CD8-positive, alpha-beta T cell (primary cell): ENCODE measurements at regions of chr6 and their contacts with region 1.

Region 1: DNA sequence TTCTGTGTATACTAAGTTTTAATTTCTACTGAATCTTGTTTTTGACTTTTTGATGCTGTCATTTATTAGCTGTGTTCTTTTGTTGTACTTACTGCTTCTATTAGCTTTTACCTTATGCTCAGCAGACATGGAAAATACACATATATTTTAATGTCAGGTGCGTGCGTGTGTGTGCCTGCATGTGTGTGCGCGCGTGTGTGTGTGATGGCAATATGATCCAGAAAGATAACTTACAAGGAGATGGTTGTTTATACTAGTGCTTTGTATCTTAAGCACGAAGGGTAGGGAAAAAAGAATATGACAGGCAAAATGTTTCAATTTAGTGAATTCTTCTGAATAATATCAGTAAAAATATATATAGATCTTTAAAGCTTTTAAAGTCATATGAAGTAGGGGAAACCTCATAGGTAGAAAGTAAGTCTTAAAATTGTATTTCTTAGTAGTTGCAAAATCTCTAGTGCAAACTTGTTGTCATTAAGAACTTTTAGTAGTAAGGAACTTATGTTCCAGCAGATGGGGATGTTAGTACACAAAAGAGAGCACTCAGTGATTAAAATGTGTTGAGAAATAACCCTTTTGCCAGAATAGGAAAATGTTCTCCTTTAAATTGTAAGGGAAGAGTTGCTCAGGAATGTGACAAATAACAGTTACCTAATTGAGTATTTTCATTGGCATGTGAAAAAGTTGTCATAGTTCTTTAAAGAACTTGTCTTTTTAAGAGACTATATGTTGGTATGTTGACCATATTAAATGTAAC is 13.2 kb downstream of the QKI start:
- DNase-seq: peak in 2 of 9 experiments; percentile 48 to 59
- ATAC-seq: no peak
- H3K4me3 ChIP-seq: no peak overlapping the region
- H3K4me3 Mint-ChIP-seq: no peak overlapping the region
- H3K27ac ChIP-seq: no peak overlapping the region
- H3K27ac Mint-ChIP-seq: no peak overlapping the region
- H3K4me1 ChIP-seq: no peaks in the 10 kb centered on the region
- H3K4me1 Mint-ChIP-seq: peaks cover 48% of the 10 kb centered on the region
- H3K27me3 ChIP-seq: no peaks in the 10 kb centered on the region
- H3K27me3 Mint-ChIP-seq: no peaks in the 10 kb centered on the region
- CTCF ChIP-seq: no peak

Region 2: GRCh38 chr6:163443985-163444533 is 16.4 kb after region 1 on chr6:
- CTCF ChIA-PET with region 1: no interaction called
- POLR2A ChIA-PET with region 1: no interaction called
- intact Hi-C with region 1: no loop called
- DNase-seq: no peak
- ATAC-seq: no peak
- H3K4me3 ChIP-seq: no peak overlapping the region
- H3K4me3 Mint-ChIP-seq: no peak overlapping the region
- H3K27ac ChIP-seq: no peak overlapping the region
- H3K27ac Mint-ChIP-seq: no peak overlapping the region
- H3K4me1 ChIP-seq: peaks cover 3% of the 10 kb centered on the region
- H3K4me1 Mint-ChIP-seq: peaks cover 53% of the 10 kb centered on the region
- H3K27me3 ChIP-seq: no peaks in the 10 kb centered on the region
- H3K27me3 Mint-ChIP-seq: no peaks in the 10 kb centered on the region
- CTCF ChIP-seq: no peak

Region 3: DNA sequence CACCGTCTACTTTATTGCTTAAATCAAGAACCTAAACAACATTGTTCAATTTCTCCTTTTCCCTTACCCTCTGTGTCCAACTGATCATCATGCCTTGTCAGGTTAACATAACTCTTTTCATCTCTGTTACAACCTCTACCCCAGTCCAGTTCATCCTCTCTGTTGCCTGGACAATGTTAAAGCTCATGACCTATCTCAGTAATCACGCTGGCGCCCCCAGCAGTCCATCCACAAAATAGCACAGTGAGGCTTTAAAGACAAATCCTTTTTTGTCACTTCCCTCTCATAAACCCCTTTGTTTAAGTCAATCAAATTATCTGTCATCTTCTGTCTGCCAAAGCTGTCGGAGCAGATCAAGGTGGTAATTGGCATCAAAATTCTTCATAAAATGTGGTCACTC is 127.0 kb after region 1 on chr6:
- CTCF ChIA-PET with region 1: interaction called, 6 read pairs
- POLR2A ChIA-PET with region 1: no interaction called
- intact Hi-C with region 1: loop called in 1 of 2 experiments (anchors 2 kb)
- DNase-seq: peak; percentile 26 to 66 (median 58)
- ATAC-seq: peak; percentile 69
- H3K4me3 ChIP-seq: no peak overlapping the region
- H3K4me3 Mint-ChIP-seq: no peak overlapping the region
- H3K27ac ChIP-seq: no peak overlapping the region
- H3K27ac Mint-ChIP-seq: no peak overlapping the region
- H3K4me1 ChIP-seq: no peaks in the 10 kb centered on the region
- H3K4me1 Mint-ChIP-seq: peaks cover 8% of the 10 kb centered on the region
- H3K27me3 ChIP-seq: no peaks in the 10 kb centered on the region
- H3K27me3 Mint-ChIP-seq: no peaks in the 10 kb centered on the region
- CTCF ChIP-seq: peak; percentile 75

Region 4: GRCh38 chr6:163585932-163586437 is 158.3 kb after region 1 on chr6:
- CTCF ChIA-PET with region 1: no interaction called
- POLR2A ChIA-PET with region 1: no interaction called
- intact Hi-C with region 1: no loop called
- DNase-seq: no peak
- ATAC-seq: no peak
- H3K4me3 ChIP-seq: no peak overlapping the region
- H3K4me3 Mint-ChIP-seq: no peak overlapping the region
- H3K27ac ChIP-seq: no peak overlapping the region
- H3K27ac Mint-ChIP-seq: no peak overlapping the region
- H3K4me1 ChIP-seq: no peaks in the 10 kb centered on the region
- H3K4me1 Mint-ChIP-seq: no peaks in the 10 kb centered on the region
- H3K27me3 ChIP-seq: no peaks in the 10 kb centered on the region
- H3K27me3 Mint-ChIP-seq: peaks cover 12% of the 10 kb centered on the region
- CTCF ChIP-seq: no peak

Region 5: DNA sequence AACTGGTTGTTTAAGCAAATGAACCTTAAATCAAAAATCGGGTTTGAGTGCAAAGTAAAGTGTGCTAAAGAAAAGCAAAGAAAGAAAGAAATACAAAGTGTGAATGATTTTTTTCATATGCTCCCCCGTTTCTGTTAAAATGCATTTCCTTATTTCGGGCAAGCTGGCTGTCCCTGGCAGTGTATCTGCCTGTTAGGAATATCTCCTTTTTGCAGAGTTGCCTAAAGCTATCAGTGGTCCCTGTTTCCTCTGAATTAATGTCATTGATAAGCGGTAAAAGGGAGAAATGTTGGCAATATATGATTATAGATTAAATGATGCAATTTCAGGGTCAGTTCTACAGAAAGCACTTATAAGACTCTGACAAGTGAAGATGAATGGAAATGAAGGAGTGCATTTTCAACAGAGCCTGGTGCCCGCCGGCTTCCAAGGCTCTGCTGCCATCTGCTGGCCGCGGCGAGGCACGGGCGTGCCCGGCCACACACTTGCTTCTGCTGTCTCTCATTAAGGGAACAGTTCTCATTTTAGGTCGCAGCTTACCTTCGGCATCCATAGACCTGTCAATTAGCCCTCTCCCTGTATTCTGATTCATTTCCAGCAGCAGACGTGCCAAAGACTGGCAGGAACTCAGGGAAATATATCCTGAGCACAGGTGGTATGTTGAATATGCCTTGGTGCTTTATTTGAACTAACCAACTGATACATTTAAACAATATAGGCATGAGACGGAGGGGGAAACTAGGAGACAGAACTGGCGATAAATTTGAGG is 1499.8 kb after region 1 on chr6:
- CTCF ChIA-PET with region 1: no interaction called
- POLR2A ChIA-PET with region 1: no interaction called
- intact Hi-C with region 1: loop called in 1 of 2 experiments (anchors 5 kb)
- DNase-seq: peak in 8 of 9 experiments; percentile 28 to 68 (median 46)
- ATAC-seq: peak; percentile 40
- H3K4me3 ChIP-seq: no peak overlapping the region
- H3K4me3 Mint-ChIP-seq: no peak overlapping the region
- H3K27ac ChIP-seq: no peak overlapping the region
- H3K27ac Mint-ChIP-seq: no peak overlapping the region
- H3K4me1 ChIP-seq: no peaks in the 10 kb centered on the region
- H3K4me1 Mint-ChIP-seq: no peaks in the 10 kb centered on the region
- H3K27me3 ChIP-seq: peaks cover 0 to 2% of the 10 kb centered on the region in 2 experiments
- H3K27me3 Mint-ChIP-seq: no peaks in the 10 kb centered on the region
- CTCF ChIP-seq: peak; percentile 93